ENCODE measurements at regions of chr6 and their contacts with region 1.

Region 1: GRCh38 chr6:3277851-3278416 is 19.2 kb downstream of the PSMG4 start:
- DNase-seq: no peak
- H3K4me3 ChIP-seq: no peak overlapping the region
- H3K27ac ChIP-seq: no peak overlapping the region
- H3K4me1 ChIP-seq: peaks cover 25% of the 10 kb centered on the region
- H3K27me3 ChIP-seq: no peaks in the 10 kb centered on the region
- CTCF ChIP-seq: no peak

Region 2: GRCh38 chr6:3732345-3733141 is 454.6 kb after region 1 on chr6:
- intact Hi-C with region 1: loop called (anchors 5 kb)
- DNase-seq: peak; percentile 62
- H3K4me3 ChIP-seq: no peak overlapping the region
- H3K27ac ChIP-seq: no peak overlapping the region
- H3K4me1 ChIP-seq: peaks cover 35% of the 10 kb centered on the region
- H3K27me3 ChIP-seq: no peaks in the 10 kb centered on the region
- CTCF ChIP-seq: peak; percentile 92